GM10248 (cell line): ENCODE measurements at regions of chr9 and their contacts with region 1.

Region 1: GRCh38 chr9:123234853-123235252 is 33.5 kb downstream of the STRBP start:
- DNase-seq: peak; percentile 39
- CTCF ChIP-seq: no peak

Region 2: DNA sequence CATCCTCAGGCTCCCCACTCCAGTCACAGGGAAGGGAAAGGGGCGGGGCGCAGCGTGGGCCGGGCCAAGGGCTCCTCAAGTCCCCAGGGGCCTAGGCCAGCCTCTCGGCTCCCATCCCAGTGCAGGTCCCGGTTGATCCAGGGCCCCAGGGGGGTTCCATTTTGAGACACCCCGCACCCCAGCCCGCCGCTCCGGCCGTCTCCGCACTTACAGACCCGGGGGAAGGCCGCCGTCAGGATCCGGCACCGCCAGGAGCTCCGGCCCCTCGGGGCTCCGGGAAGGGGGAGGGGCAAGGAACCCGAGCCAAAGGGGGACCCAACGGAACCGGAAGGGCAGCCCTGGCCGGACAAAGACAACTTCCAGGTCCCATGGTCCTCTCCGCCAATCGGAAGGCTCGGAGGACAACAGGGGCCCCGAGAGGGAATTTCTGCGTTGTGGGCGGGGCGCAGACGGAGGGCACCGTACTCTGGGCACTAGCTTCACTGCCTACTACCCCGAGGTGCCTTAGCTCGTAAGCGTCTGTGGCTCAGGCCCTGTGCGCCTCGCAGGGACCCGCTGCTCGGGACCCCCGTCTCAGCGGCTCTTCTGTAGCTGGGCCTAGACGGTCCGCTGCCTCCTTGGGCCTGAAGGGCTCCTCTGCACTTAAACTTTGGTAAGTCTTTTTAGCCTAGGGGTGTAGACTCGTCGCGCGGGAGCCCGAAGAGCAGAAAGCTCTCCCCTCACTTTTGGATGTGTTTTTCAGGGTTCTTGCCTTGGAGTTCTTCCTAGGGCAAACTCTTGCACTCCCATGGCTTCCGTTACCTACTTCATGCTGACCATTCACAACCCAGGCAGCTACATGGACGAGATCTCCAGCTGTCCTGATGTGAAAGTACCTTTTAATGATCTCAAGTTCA is 303.4 kb before region 1 on chr9 and contains the start of gene ZBTB26:
- CTCF ChIA-PET with region 1: no interaction called
- POLR2A ChIA-PET with region 1: no interaction called
- DNase-seq: peak; percentile 95
- CTCF ChIP-seq: no peak

Region 3: DNA sequence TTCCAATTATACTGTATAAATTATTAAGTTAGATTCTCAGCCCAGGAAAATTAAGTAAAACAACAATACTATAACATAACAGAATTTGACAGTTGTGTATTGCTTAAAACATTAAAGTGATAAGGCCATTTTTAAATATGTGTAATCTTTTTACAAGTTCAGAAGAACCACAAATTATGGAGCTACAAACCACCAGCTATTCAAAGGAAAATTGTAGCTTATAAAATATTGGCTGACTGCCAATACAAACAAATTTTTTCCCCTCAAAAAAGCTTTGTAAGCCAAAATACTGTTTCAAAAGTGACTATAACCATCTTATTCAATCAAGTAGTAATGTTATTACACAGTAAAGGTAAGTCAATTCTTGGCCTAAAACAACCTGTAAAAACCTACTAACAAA is 11.7 kb after region 1 on chr9:
- CTCF ChIA-PET with region 1: interaction called, 25 read pairs
- POLR2A ChIA-PET with region 1: no interaction called
- DNase-seq: no peak
- CTCF ChIP-seq: no peak

Region 4: GRCh38 chr9:123251741-123252140 is 16.9 kb after region 1 on chr9:
- CTCF ChIA-PET with region 1: interaction called, 25 read pairs
- POLR2A ChIA-PET with region 1: no interaction called
- DNase-seq: no peak
- CTCF ChIP-seq: no peak